ENCODE measurements at regions of chr5 and their contacts with region 1.

Region 1: GRCh38 chr5:10563945-10564837 is at the start of gene ANKRD33B:
- DNase-seq: peak; percentile 84
- ATAC-seq: peak; percentile 72
- H3K4me3 Mint-ChIP-seq: peak within 1 kb of the TSS; percentile 97
- H3K27ac Mint-ChIP-seq: peak within 1 kb of the TSS; percentile 93
- H3K4me1 Mint-ChIP-seq: peaks cover 65% of the 10 kb centered on the region
- H3K27me3 Mint-ChIP-seq: no peaks in the 10 kb centered on the region
- CTCF ChIP-seq: no peak
- total RNA-seq, gene ANKRD33B: 156 and 170 TPM in 2 replicates

Region 2: DNA sequence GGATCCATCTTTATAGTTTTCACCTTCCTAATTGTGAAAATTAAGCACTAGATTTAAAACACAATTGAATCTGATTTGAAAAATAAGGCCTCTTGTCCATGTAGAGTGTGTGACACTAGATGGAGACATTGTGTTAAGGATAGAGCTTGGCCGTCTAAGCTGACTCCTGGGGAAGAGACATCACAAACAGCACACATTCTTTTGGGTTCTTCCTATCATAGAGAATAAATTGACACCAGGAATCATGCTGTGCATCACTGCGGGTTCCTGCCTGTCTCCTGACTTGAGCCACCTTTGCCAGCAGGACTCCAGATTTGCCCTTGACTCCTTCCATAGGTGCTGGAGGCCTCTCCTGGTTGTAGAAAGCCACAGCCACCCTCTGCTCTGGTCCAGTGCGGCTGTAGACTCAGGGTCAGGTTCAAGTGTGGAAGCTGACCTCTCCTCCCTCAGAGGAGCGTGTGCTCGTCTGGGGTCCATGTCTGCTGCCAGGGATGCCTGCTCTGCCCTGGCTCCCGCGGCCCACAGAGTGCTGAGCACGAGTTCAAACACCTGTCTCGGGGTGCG is 111.3 kb before region 1 on chr5:
- CTCF ChIA-PET with region 1: interaction called, 6 read pairs
- POLR2A ChIA-PET with region 1: interaction called, 3 read pairs
- intact Hi-C with region 1: loop called (anchors 1 kb)
- DNase-seq: no peak
- ATAC-seq: peak; percentile 94
- H3K4me3 Mint-ChIP-seq: no peak overlapping the region
- H3K27ac Mint-ChIP-seq: no peak overlapping the region
- H3K4me1 Mint-ChIP-seq: peaks cover 5% of the 10 kb centered on the region
- H3K27me3 Mint-ChIP-seq: no peaks in the 10 kb centered on the region
- CTCF ChIP-seq: peak; percentile 39

Region 3: GRCh38 chr5:10505517-10506095 is 58.6 kb before region 1 on chr5:
- CTCF ChIA-PET with region 1: no interaction called
- POLR2A ChIA-PET with region 1: interaction called, 4 read pairs
- intact Hi-C with region 1: loop called (anchors 1 kb)
- DNase-seq: no peak
- ATAC-seq: peak; percentile 98
- H3K4me3 Mint-ChIP-seq: peak overlapping the region; percentile 8
- H3K27ac Mint-ChIP-seq: peak overlapping the region; percentile 76
- H3K4me1 Mint-ChIP-seq: peaks cover 13% of the 10 kb centered on the region
- H3K27me3 Mint-ChIP-seq: no peaks in the 10 kb centered on the region
- CTCF ChIP-seq: no peak

Region 4: GRCh38 chr5:10577371-10578292 is 13.4 kb after region 1 on chr5:
- CTCF ChIA-PET with region 1: no interaction called
- POLR2A ChIA-PET with region 1: interaction called, 53 read pairs
- intact Hi-C with region 1: loop called (anchors 1 kb)
- DNase-seq: no peak
- ATAC-seq: no peak
- H3K4me3 Mint-ChIP-seq: peak overlapping the region; percentile 83
- H3K27ac Mint-ChIP-seq: peak overlapping the region; percentile 81
- H3K4me1 Mint-ChIP-seq: peaks cover 85% of the 10 kb centered on the region
- H3K27me3 Mint-ChIP-seq: no peaks in the 10 kb centered on the region
- CTCF ChIP-seq: no peak

Region 5: GRCh38 chr5:10621832-10622231 is 57.6 kb after region 1 on chr5:
- CTCF ChIA-PET with region 1: interaction called, 23 read pairs
- POLR2A ChIA-PET with region 1: interaction called, 20 read pairs
- intact Hi-C with region 1: no loop called
- DNase-seq: no peak
- ATAC-seq: no peak
- H3K4me3 Mint-ChIP-seq: no peak overlapping the region
- H3K27ac Mint-ChIP-seq: no peak overlapping the region
- H3K4me1 Mint-ChIP-seq: peaks cover 48% of the 10 kb centered on the region
- H3K27me3 Mint-ChIP-seq: no peaks in the 10 kb centered on the region
- CTCF ChIP-seq: no peak

Region 6: DNA sequence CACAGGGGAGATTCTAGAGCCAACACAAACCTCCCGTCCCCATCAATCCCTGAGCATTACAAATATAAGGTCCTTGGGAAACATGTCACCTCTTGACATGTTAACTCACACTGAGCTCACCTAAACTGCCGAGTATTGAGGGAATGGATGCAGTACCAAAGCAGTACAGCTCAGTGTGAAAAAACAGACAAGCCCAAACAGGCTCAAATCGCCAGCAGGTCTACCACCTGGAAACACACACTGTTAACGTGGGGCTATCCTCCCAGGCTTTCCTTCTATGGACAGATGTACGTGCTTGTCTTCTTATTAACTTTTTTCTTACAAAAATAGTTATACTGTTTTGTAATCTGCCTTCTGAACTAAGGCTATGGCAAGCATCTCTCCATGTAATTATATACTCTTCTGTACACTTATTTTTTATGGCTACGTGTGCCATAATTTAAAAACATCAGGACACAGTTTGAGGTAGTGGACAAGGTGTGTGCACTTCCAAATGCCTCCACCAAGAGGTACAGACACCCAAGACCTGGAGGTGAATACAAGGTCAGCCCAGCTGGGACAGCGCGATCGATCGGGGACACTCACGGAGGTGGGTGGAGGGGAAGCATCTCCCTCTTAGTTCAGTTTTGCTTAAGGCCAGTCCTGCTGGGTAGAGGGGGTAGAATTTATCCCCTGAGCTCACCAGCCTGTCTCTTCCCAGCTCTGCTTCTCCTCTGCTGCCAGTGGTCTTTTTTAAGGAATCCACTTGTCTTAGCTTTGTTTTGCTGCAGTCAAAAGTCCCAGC is 120.3 kb after region 1 on chr5:
- CTCF ChIA-PET with region 1: no interaction called
- POLR2A ChIA-PET with region 1: interaction called, 6 read pairs
- intact Hi-C with region 1: loop called (anchors 2 kb)
- DNase-seq: no peak
- ATAC-seq: peak; percentile 62
- H3K4me3 Mint-ChIP-seq: peak overlapping the region; percentile 29
- H3K27ac Mint-ChIP-seq: peak overlapping the region; percentile 82
- H3K4me1 Mint-ChIP-seq: peaks cover 15% of the 10 kb centered on the region
- H3K27me3 Mint-ChIP-seq: no peaks in the 10 kb centered on the region
- CTCF ChIP-seq: no peak

Region 7: GRCh38 chr5:10761166-10761932 is 197.2 kb after region 1 on chr5 and contains the start of gene DAP:
- CTCF ChIA-PET with region 1: no interaction called
- POLR2A ChIA-PET with region 1: no interaction called
- intact Hi-C with region 1: loop called (anchors 1 kb)
- DNase-seq: peak; percentile 92
- ATAC-seq: peak; percentile 82
- H3K4me3 Mint-ChIP-seq: peak within 1 kb of the TSS; percentile 91
- H3K27ac Mint-ChIP-seq: peak within 1 kb of the TSS; percentile 92
- H3K4me1 Mint-ChIP-seq: peaks cover 57% of the 10 kb centered on the region
- H3K27me3 Mint-ChIP-seq: no peaks in the 10 kb centered on the region
- CTCF ChIP-seq: no peak
- total RNA-seq, gene DAP: 50.5 and 51.3 TPM in 2 replicates

Measured in activated B cell treated with CpG ODN at 0.5 μM for 24 hours (primary cell).